ENCODE measurements at regions of chr20 and their contacts with region 1.

Region 1: GRCh38 chr20:57654363-57654997 is 34.3 kb upstream of the ZBP1 start:
- DNase-seq: peak; percentile 89
- H3K4me3 ChIP-seq: no peak overlapping the region
- H3K27ac ChIP-seq: no peak overlapping the region
- H3K4me1 ChIP-seq: peaks cover 7 to 29% (median 22%) of the 10 kb centered on the region in 4 donors
- H3K27me3 ChIP-seq: no peaks in the 10 kb centered on the region
- CTCF ChIP-seq: peak; percentile 89 to 95 (median 94)
- EP300 ChIP-seq: no peak
- POLR2A ChIP-seq: no peak

Region 2: GRCh38 chr20:57596998-57597939 is 57.2 kb before region 1 on chr20:
- intact Hi-C with region 1: loop called (anchors 5 kb)
- DNase-seq: no peak
- H3K4me3 ChIP-seq: peak overlapping the region in 2 of 4 donors; percentile 17 to 45
- H3K27ac ChIP-seq: no peak overlapping the region
- H3K4me1 ChIP-seq: peaks cover 7 to 23% (median 14%) of the 10 kb centered on the region in 4 donors
- H3K27me3 ChIP-seq: peaks cover 0 to 17% (median 0%) of the 10 kb centered on the region in 4 donors
- CTCF ChIP-seq: peak; percentile 88 to 97 (median 93)
- EP300 ChIP-seq: no peak
- POLR2A ChIP-seq: no peak

Region 3: GRCh38 chr20:57957411-57958049 is 303.1 kb after region 1 on chr20:
- intact Hi-C with region 1: loop called (anchors 10 kb)
- DNase-seq: no peak
- H3K4me3 ChIP-seq: no peak overlapping the region
- H3K27ac ChIP-seq: no peak overlapping the region
- H3K4me1 ChIP-seq: peaks cover 0 to 38% (median 27%) of the 10 kb centered on the region in 4 donors
- H3K27me3 ChIP-seq: no peaks in the 10 kb centered on the region
- CTCF ChIP-seq: no peak
- EP300 ChIP-seq: no peak
- POLR2A ChIP-seq: no peak

Region 4: DNA sequence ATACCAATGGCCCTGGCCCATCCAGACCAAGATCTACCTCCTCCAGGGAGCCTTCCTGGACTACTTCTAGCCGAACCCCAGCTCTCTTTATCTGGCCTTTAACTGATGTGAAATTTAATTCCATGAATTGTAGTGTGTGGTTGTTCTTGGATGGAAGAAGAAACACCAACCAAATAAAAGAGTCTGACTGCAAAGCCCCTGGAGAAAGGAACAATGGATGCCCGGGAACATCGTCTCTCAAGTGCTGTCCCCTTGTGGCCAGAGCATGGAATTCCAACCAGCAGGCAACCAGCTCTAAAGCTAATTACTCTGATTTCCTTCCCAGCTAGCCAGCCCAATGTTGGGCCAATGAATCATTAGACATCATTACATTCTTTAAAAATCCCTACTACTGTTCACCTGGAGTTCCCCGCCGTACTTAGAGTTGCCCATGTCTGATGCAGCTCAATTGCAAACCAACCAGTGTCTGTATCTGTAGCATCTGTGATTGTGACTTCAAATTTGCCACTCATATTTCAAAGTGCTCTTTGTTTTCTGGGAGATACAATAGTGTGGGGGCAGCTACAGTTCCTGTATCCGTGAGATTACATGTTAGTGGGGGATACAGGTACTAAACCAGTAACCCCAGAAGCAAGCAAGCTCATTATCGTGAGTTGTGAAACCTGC is 432.8 kb after region 1 on chr20:
- intact Hi-C with region 1: loop called (anchors 2 kb)
- DNase-seq: no peak
- H3K4me3 ChIP-seq: no peak overlapping the region
- H3K27ac ChIP-seq: no peak overlapping the region
- H3K4me1 ChIP-seq: peaks cover 0 to 13% (median 4%) of the 10 kb centered on the region in 4 donors
- H3K27me3 ChIP-seq: no peaks in the 10 kb centered on the region
- CTCF ChIP-seq: peak; percentile 77 to 89 (median 77)
- EP300 ChIP-seq: no peak
- POLR2A ChIP-seq: no peak

Region 5: GRCh38 chr20:58179432-58180099 is 525.1 kb after region 1 on chr20:
- intact Hi-C with region 1: loop called (anchors 1 kb)
- DNase-seq: no peak
- H3K4me3 ChIP-seq: peak overlapping the region; percentile 30 to 51 (median 41)
- H3K27ac ChIP-seq: no peak overlapping the region
- H3K4me1 ChIP-seq: peaks cover 9 to 38% (median 30%) of the 10 kb centered on the region in 4 donors
- H3K27me3 ChIP-seq: peaks cover 0 to 17% (median 0%) of the 10 kb centered on the region in 4 donors
- CTCF ChIP-seq: peak in 2 of 3 experiments; percentile 95 to 99
- EP300 ChIP-seq: no peak
- POLR2A ChIP-seq: no peak

Region 6: GRCh38 chr20:58209652-58210397 is 555.3 kb after region 1 on chr20:
- intact Hi-C with region 1: loop called (anchors 1 kb)
- DNase-seq: peak; percentile 93
- H3K4me3 ChIP-seq: peak overlapping the region in 1 of 4 donors; percentile 19
- H3K27ac ChIP-seq: no peak overlapping the region
- H3K4me1 ChIP-seq: peaks cover 0 to 8% (median 4%) of the 10 kb centered on the region in 4 donors
- H3K27me3 ChIP-seq: peaks cover 0 to 22% (median 2%) of the 10 kb centered on the region in 4 donors
- CTCF ChIP-seq: peak; percentile 100
- EP300 ChIP-seq: no peak
- POLR2A ChIP-seq: no peak

Measured in esophagus muscularis mucosa (tissue), 4 donors.